ENCODE measurements at regions of chr6 and their contacts with region 1.

Region 1: GRCh38 chr6:53348371-53349208 is at the start of gene ELOVL5:
- DNase-seq: peak; percentile 99
- ATAC-seq: peak; percentile 79
- H3K4me3 Mint-ChIP-seq: peak within 1 kb of the TSS; percentile 93
- H3K27ac Mint-ChIP-seq: peak within 1 kb of the TSS; percentile 91
- H3K4me1 Mint-ChIP-seq: peaks cover 46% of the 10 kb centered on the region
- H3K27me3 Mint-ChIP-seq: no peaks in the 10 kb centered on the region
- total RNA-seq, gene ELOVL5: 98.1 to 106 TPM

Region 2: GRCh38 chr6:53064726-53065215 is 283.8 kb before region 1 on chr6:
- CTCF ChIA-PET with region 1: no interaction called
- POLR2A ChIA-PET with region 1: no interaction called
- intact Hi-C with region 1: loop called in 1 of 2 experiments (anchors 5 kb)
- DNase-seq: peak; percentile 98
- ATAC-seq: peak; percentile 84
- H3K4me3 Mint-ChIP-seq: peak overlapping the region; percentile 97
- H3K27ac Mint-ChIP-seq: peak overlapping the region; percentile 100
- H3K4me1 Mint-ChIP-seq: peaks cover 55% of the 10 kb centered on the region
- H3K27me3 Mint-ChIP-seq: no peaks in the 10 kb centered on the region

Region 3: GRCh38 chr6:53165293-53165692 is 183.3 kb before region 1 on chr6:
- CTCF ChIA-PET with region 1: no interaction called
- POLR2A ChIA-PET with region 1: no interaction called
- intact Hi-C with region 1: no loop called
- DNase-seq: no peak
- ATAC-seq: no peak
- H3K4me3 Mint-ChIP-seq: no peak overlapping the region
- H3K27ac Mint-ChIP-seq: no peak overlapping the region
- H3K4me1 Mint-ChIP-seq: peaks cover 7% of the 10 kb centered on the region
- H3K27me3 Mint-ChIP-seq: no peaks in the 10 kb centered on the region

Region 4: DNA sequence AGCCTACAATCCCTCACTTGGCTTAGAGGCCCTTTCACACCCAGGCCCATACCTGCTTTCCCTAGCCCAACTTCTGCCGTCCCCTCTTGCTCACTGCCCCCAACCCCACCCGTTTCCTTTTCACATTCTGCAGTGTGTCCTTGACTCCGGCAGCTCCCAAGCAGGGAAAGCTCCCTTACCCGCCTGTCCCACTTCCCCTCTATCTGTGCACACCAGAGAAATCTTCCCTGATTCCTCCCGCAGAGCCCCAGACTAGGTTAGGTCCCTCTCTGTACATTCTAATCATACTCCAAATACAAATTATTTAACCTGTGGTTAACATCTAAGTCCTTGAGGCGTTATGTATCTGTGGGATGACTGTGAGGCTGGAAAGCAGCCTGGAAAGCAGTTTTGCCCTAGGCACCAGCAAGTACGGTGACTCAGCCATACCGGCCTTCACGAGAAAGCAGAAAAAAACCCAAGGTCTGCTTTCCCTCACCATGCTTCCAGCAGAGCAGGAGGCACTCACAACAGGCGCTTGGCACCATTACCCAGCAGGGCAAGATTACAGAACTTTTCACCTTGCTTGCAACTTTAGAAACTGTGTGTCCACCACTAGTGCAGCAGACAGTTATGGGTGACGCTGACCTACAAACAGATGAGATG is 22.1 kb before region 1 on chr6:
- CTCF ChIA-PET with region 1: interaction called, 14 read pairs
- POLR2A ChIA-PET with region 1: interaction called, 10 read pairs
- intact Hi-C with region 1: no loop called
- DNase-seq: peak; percentile 41
- ATAC-seq: peak; percentile 17
- H3K4me3 Mint-ChIP-seq: no peak overlapping the region
- H3K27ac Mint-ChIP-seq: peak overlapping the region; percentile 23
- H3K4me1 Mint-ChIP-seq: peaks cover 68% of the 10 kb centered on the region
- H3K27me3 Mint-ChIP-seq: no peaks in the 10 kb centered on the region

Region 5: DNA sequence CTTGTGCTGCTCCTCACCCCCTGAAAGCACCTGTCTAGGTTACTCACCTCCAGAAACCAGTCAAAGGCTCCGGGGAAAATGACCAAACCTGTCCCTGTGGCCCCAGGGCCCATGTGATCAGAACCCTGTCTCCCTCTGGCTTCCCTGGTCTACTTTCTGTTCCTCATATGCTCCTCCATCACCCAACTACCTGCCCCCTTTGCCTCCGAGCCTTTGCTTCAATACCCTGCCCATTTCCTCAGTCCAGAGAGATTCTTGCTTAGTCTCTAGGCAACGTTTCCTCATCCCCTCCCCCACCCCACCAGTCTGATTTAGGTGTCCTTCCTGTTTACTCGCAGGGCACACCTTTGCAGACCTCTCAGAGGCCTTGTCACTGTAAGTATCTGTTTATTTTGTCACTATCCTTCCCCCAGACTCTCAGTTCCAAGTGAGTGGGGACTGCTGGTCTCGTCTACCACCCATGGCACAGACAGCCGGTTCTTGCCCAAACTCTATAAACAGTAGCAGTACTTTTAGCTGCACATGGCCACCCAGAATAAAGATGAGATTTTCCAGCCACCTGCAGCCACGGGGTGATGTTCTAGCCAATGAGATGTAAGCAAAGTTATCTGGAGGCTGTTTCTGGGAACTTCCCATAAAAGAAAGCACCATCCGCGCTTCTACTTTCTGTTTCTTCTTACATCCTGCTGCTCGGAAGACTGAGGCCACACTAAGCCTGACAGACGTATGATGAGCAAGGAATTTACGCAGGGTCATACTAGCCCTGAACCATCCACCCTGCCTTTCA is 13.2 kb before region 1 on chr6:
- CTCF ChIA-PET with region 1: interaction called, 14 read pairs
- POLR2A ChIA-PET with region 1: interaction called, 11 read pairs
- intact Hi-C with region 1: loop called (anchors 1 kb)
- DNase-seq: peak; percentile 77
- ATAC-seq: peak; percentile 82
- H3K4me3 Mint-ChIP-seq: peak overlapping the region; percentile 76
- H3K27ac Mint-ChIP-seq: peak overlapping the region; percentile 99
- H3K4me1 Mint-ChIP-seq: peaks cover 86% of the 10 kb centered on the region
- H3K27me3 Mint-ChIP-seq: no peaks in the 10 kb centered on the region

Region 6: GRCh38 chr6:53359072-53359842 is 10.7 kb after region 1 on chr6:
- CTCF ChIA-PET with region 1: interaction called, 7 read pairs
- POLR2A ChIA-PET with region 1: interaction called, 3 read pairs
- intact Hi-C with region 1: loop called (anchors 1 kb)
- DNase-seq: peak; percentile 95
- ATAC-seq: peak; percentile 96
- H3K4me3 Mint-ChIP-seq: peak overlapping the region; percentile 87
- H3K27ac Mint-ChIP-seq: peak overlapping the region; percentile 98
- H3K4me1 Mint-ChIP-seq: peaks cover 45% of the 10 kb centered on the region
- H3K27me3 Mint-ChIP-seq: no peaks in the 10 kb centered on the region

Region 7: DNA sequence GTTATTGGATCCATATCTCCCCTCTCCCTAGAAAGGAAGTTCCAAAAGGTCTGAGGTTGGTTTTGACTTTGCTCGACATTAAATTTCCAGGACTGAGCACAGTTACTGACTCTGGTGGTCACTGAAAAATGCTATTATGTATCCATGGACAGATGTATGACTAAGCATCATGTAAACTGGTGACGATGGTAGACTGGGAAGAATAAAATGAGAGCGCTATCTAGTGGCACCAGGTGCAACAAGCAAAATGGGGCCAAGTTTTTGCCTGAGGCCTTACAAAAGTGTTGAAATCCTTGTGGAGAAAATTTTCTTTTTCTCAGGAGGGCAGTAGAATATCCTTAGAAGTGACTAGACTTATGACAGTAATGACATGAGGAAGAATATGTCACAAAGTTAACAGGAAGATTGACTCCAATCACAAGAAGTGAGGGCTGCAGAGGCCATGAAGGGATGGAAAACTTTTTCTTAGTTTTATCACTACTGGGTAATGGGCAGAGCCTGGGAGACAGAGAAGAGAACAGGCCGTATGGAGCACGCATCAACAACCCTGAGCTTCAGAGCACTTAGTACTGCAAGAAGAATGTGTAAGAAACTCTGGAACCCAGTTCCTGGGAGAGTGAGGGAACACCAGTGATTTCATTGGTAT is 89.1 kb after region 1 on chr6:
- CTCF ChIA-PET with region 1: no interaction called
- POLR2A ChIA-PET with region 1: no interaction called
- intact Hi-C with region 1: loop called in 1 of 2 experiments (anchors 1 kb)
- DNase-seq: peak; percentile 34
- ATAC-seq: peak; percentile 53
- H3K4me3 Mint-ChIP-seq: no peak overlapping the region
- H3K27ac Mint-ChIP-seq: no peak overlapping the region
- H3K4me1 Mint-ChIP-seq: peaks cover 28% of the 10 kb centered on the region
- H3K27me3 Mint-ChIP-seq: peaks cover 3% of the 10 kb centered on the region